HCT116 (cell line): ENCODE measurements at regions of chr4 and their contacts with region 1.

Region 1: DNA sequence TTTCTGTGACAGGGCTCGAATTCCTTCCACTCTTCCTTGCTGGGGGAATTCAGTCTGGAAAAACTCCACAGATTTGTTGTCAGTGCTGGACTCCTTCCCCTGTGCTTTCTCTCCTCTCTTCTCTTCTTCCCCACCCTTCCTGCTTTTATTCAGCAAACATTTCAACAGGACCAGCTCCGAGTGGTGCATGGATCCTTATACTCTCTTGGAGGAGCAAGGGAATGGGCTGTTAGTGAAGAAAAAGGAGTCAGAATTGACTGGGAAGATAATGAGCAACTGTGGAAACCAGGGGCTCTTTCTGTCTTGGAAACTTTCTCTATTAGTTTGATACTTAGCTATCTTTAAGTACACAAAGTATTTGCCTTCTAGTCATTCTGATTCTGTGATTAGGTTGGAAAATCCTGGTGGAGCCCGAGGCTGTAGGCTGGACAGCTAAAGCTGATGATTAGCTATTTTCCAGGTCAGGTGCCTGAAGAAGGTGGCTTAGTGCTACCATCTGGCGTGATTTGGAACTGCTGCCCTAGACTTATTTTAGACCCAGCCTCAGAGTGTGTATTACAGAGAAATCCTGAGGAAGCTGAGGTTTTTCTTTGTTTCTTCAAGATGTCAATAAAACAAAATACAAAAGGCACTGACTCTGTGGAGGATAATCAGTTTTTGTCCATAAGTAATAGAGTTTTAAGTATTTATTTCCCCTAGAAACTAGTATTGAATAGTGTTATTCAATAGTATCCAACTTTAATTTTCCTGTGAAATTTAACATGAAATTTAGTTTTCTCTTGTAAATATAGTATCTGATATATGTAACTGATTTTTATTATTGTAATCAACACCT is 38.4 kb downstream of the NAP1L5 start:
- DNase-seq: peak; percentile 35
- ATAC-seq: peak; percentile 99
- H3K4me3 ChIP-seq: no peak overlapping the region
- H3K27ac ChIP-seq: no peak overlapping the region
- H3K4me1 ChIP-seq: peaks cover 0 to 23% of the 10 kb centered on the region in 2 experiments; a peak in 3 of 4 replicates
- H3K27me3 ChIP-seq: no peaks in the 10 kb centered on the region
- CTCF ChIP-seq: peak; percentile 72 to 87 (median 79)
- POLR2A ChIP-seq: no peak
- RAD21 ChIP-seq: peak; percentile 88

Region 2: DNA sequence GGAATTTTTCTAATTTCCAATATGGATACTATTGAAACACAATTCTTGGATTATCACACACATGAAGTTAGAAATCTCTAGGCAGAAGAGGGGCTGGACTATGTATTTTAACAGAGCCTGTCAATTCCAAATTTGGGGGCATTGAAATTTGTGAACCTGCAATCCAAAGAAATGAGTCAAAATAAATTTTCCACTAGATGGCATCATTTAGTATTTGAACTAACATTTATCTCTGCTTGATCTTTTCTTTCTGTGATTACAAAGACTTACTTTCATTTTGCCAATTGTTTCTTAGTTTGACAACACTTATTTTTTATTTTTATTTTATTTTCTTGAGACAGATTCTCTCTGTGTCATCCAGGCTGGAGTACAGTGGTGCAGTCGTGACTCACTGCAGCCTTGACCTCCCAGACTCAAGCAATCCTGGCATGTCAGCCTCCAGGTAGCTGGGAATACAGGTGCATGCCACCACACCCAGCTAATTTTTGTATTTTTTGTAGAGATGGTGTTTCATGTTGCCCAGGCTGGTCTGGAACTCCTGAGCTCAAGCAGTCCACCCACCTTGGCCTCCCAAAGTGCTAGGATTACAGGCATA is 133.0 kb before region 1 on chr4:
- CTCF ChIA-PET with region 1: interaction called, 23 read pairs
- POLR2A ChIA-PET with region 1: no interaction called
- RAD21 ChIA-PET with region 1: interaction called, 3 to 5 read pairs
- intact Hi-C with region 1: no loop called
- DNase-seq: no peak
- ATAC-seq: no peak
- H3K4me3 ChIP-seq: no peak overlapping the region
- H3K27ac ChIP-seq: no peak overlapping the region
- H3K4me1 ChIP-seq: peaks cover 8 to 24% of the 10 kb centered on the region in 2 experiments; a peak in 3 of 4 replicates
- H3K27me3 ChIP-seq: no peaks in the 10 kb centered on the region
- CTCF ChIP-seq: peak in 2 of 3 experiments; percentile 37 to 39; a peak in 3 of 6 replicates
- POLR2A ChIP-seq: no peak
- RAD21 ChIP-seq: peak; percentile 44

Region 3: DNA sequence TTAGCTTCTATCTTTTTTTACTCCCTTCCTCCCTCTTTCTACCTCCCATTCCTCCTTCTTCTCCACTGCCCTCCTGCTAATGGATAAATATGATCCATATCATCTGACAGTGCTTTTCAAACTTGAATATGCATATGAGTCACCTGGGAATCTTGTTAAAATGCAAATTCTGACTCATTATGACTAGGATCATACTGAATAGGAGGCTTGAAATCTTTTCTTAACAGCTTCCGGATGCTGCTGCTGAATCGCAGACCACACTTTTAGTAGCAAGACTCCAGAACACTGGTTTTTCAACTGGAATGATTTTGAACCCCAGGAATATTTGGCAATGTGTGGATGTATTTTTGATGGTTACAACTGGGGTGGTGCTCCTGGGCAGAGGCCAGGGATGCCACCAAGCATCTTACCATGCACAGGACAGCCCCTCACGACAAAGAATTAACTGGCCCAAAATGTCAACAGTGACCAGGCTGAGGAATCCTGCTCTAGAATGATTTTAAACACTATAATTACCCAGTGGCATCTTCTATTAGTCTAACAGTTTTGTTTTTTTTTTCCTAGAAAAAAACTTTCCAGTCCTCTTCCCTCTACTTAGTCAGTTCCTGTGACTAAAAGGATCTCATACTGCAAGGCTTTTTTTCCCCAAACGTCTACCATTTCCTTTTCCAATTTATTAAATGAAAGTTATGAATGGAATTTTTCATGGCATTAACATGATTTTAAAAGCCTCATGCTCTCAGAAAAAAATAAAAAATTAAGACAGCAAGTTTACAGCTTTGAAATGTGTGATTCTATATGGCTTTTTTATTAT is 125.1 kb before region 1 on chr4:
- CTCF ChIA-PET with region 1: interaction called, 71 read pairs
- POLR2A ChIA-PET with region 1: interaction called, 5 read pairs
- RAD21 ChIA-PET with region 1: interaction called, 7 to 17 read pairs
- intact Hi-C with region 1: loop called (anchors 1 kb)
- DNase-seq: no peak
- ATAC-seq: no peak
- H3K4me3 ChIP-seq: no peak overlapping the region
- H3K27ac ChIP-seq: no peak overlapping the region
- H3K4me1 ChIP-seq: no peaks in the 10 kb centered on the region
- H3K27me3 ChIP-seq: no peaks in the 10 kb centered on the region
- CTCF ChIP-seq: no peak
- POLR2A ChIP-seq: no peak
- RAD21 ChIP-seq: no peak

Region 4: DNA sequence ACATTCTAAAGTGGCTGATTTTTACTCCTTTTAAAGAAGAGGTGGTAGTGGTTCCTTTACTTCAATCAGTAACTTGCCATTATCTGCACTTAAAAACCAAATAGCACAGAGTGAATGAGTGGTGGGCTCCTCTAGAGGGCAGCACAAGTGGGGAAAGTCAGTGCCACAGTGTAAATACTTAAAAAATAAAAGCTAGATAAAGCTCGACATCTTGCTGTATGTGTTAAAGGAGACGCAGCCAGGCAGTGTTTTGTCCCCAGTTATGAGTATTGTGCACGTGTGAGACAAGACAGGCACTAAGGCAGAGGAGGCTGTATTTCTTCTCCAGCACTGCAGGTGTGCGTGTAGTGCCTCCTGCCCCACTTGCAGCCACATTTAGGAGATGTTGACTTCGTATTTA is 13.7 kb after region 1 on chr4:
- CTCF ChIA-PET with region 1: interaction called, 15 read pairs
- POLR2A ChIA-PET with region 1: no interaction called
- RAD21 ChIA-PET with region 1: no interaction called
- intact Hi-C with region 1: no loop called
- DNase-seq: no peak
- ATAC-seq: peak; percentile 94
- H3K4me3 ChIP-seq: no peak overlapping the region
- H3K27ac ChIP-seq: no peak overlapping the region
- H3K4me1 ChIP-seq: no peaks in the 10 kb centered on the region
- H3K27me3 ChIP-seq: no peaks in the 10 kb centered on the region
- CTCF ChIP-seq: peak; percentile 33 to 78 (median 74); a peak in 5 of 6 replicates
- POLR2A ChIP-seq: no peak
- RAD21 ChIP-seq: peak; percentile 41; the same call in 1 of the 2 replicates

Region 5: GRCh38 chr4:88728146-88728545 is 68.9 kb after region 1 on chr4:
- CTCF ChIA-PET with region 1: no interaction called
- POLR2A ChIA-PET with region 1: no interaction called
- RAD21 ChIA-PET with region 1: no interaction called
- intact Hi-C with region 1: no loop called
- DNase-seq: no peak
- ATAC-seq: no peak
- H3K4me3 ChIP-seq: no peak overlapping the region
- H3K27ac ChIP-seq: no peak overlapping the region
- H3K4me1 ChIP-seq: no peaks in the 10 kb centered on the region
- H3K27me3 ChIP-seq: no peaks in the 10 kb centered on the region
- CTCF ChIP-seq: no peak
- POLR2A ChIP-seq: no peak
- RAD21 ChIP-seq: no peak

Region 6: GRCh38 chr4:89336818-89337420 is 677.6 kb after region 1 on chr4:
- CTCF ChIA-PET with region 1: no interaction called
- POLR2A ChIA-PET with region 1: no interaction called
- RAD21 ChIA-PET with region 1: no interaction called
- intact Hi-C with region 1: no loop called
- DNase-seq: no peak
- ATAC-seq: no peak
- H3K4me3 ChIP-seq: no peak overlapping the region
- H3K27ac ChIP-seq: no peak overlapping the region
- H3K4me1 ChIP-seq: no peaks in the 10 kb centered on the region
- H3K27me3 ChIP-seq: no peaks in the 10 kb centered on the region
- CTCF ChIP-seq: no peak
- POLR2A ChIP-seq: no peak
- RAD21 ChIP-seq: no peak